CD8-positive, alpha-beta memory T cell (primary cell): ENCODE measurements at regions of chr14 and their contacts with region 1.

Region 1: DNA sequence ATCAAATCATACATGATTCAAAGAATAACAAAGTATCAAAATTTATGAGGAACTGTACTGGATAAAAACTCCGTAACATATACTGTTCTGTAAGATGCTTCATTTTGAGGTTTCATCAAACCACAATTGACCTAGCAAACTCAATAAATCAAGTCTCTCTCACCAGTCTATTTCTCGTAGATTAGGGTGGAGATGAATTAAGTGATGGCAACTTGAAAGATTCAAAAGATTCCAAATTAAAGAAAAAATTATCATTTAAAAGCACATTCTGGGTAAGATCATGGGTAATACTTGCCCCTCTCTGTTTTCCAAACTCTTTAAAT is 74.4 kb downstream of the PAPLN start:
- DNase-seq: no peak
- H3K4me3 ChIP-seq: no peak overlapping the region
- H3K4me3 Mint-ChIP-seq: no peak overlapping the region
- H3K27ac ChIP-seq: no peak overlapping the region
- H3K27ac Mint-ChIP-seq: peak overlapping the region in 1 of 8 donors; percentile 54
- H3K4me1 ChIP-seq: no peaks in the 10 kb centered on the region
- H3K4me1 Mint-ChIP-seq: peaks cover 10 to 17% (median 17%) of the 10 kb centered on the region in 3 donors
- H3K27me3 ChIP-seq: no peaks in the 10 kb centered on the region
- H3K27me3 Mint-ChIP-seq: peaks cover 0 to 1% of the 10 kb centered on the region in 2 donors

Region 2: GRCh38 chr14:73339846-73340595 is 28.4 kb after region 1 on chr14:
- CTCF ChIA-PET with region 1: no interaction called
- POLR2A ChIA-PET with region 1: interaction called, 13 read pairs
- DNase-seq: no peak
- H3K4me3 ChIP-seq: no peak overlapping the region
- H3K4me3 Mint-ChIP-seq: no peak overlapping the region
- H3K27ac ChIP-seq: no peak overlapping the region
- H3K27ac Mint-ChIP-seq: no peak overlapping the region
- H3K4me1 ChIP-seq: no peaks in the 10 kb centered on the region
- H3K4me1 Mint-ChIP-seq: peaks cover 1 to 12% (median 11%) of the 10 kb centered on the region in 3 donors
- H3K27me3 ChIP-seq: no peaks in the 10 kb centered on the region
- H3K27me3 Mint-ChIP-seq: no peaks in the 10 kb centered on the region